GM13977 (cell line): ENCODE measurements at regions of chr1 and their contacts with region 1.

Region 1: GRCh38 chr1:19918057-19918456 is 5.4 kb downstream of the PLA2G2E start:
- DNase-seq: peak; percentile 93
- CTCF ChIP-seq: peak; percentile 89

Region 2: DNA sequence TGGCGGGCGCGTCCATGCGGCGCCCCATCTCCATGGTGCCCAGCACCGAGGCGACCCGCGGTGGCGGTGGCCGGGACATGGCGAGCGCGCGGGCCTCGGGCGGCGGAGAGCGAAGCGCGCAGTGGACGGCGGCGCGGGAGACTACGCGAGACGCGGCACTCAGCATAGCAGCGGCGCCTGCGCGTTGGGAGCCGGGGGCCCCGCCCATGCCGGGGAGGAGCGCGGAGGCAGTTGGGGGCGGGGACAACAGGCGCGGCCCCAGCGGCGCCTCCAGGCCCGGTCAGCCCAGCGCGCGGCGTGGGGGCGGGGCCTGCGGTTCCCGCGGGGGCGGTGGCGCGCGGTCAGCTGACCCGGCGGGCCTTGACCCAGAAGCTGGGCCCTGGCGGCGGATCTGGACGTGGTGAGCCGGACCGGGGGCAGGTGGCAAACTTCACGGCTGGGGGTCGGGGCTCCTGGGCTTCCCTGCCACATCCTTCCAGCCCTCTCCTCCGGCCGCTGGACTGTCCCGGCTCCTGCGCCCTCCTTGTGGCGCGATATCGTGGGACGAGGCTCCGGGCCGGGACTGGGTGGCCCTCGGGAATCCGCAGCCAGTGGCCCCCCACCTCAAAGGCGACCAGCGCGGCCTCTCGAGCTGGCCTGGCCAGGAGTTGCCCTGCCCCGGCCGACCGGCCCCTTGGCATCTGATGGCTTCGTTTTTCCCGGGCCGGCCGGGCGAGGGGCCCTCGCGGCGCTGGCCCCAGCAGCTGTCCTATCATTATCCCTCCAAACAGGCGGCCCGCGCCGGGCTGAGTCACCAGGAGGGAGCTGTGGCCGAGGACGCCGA is 605.9 kb before region 1 on chr1 and contains the starts of genes AKR7A2 and SLC66A1:
- in situ Hi-C with region 1: no loop called
- DNase-seq: peak; percentile 100
- CTCF ChIP-seq: no peak

Region 3: DNA sequence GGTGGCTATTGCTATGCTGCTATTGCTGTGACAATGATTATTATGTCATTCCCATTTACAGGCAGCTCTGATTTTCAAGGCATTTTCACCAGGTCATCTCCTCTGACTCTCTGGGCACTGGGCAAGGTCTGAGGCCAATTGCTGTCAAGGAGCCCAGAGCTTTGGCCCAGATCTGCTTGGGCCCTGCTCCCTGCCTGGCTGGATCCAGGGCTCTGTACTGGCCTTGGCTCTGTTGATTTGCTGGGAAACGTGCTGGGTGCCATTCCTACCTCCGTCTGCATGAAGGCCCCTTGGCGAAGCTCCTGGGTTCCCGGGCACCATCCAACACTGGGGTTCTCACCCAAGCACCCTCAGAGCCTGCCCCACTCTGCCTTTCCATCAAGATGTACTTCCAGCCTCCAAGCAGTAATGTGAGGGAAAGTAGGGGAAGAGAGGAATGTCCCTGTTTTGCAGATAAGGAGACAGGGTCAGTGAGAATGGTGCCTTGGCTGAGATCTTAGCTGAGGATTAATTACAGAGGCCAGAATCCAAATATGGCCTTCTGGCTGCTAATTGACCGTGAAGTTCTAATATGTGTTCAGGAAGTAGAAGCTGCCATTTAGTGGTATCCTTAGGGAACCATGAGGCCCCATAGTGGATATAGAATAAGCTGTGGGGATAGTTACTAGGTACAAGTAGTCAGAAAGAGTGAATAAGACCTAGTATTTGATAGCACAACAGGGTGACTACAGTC is 189.5 kb before region 1 on chr1:
- in situ Hi-C with region 1: no loop called
- DNase-seq: no peak
- CTCF ChIP-seq: no peak

Region 4: DNA sequence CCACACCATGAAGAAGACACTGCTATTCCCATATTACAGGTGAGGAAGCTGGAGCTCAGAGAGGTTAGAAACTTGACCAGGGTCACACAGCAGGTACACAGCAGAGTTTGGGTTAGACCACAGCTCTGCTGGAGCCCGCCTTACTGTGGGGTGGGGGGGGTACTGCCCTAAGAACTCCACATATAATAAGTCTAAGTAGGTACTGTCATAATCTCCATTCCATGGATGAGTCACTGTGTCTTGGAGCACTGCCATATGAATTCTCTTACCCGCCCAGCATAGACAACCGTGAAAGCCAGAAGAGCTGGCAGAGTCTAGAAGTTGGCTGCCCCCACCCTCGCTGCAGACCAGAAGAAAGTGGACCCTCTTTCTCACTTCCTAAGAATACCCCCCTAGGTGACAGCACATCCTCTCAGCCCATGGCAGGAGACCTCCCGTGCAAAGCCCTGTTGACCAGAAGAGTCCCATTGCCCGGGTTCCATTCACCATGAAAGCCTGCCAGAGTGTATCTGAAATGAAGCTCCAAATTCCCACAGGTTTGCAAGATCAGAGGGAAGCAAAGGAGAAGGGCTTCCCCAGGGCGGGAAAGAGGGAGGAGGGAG is 206.5 kb after region 1 on chr1:
- in situ Hi-C with region 1: loop called (anchors 25 kb)
- DNase-seq: no peak
- CTCF ChIP-seq: no peak